Mammary epithelial cell (primary cell): ENCODE measurements at regions of chr15 and their contacts with region 1.

Region 1: DNA sequence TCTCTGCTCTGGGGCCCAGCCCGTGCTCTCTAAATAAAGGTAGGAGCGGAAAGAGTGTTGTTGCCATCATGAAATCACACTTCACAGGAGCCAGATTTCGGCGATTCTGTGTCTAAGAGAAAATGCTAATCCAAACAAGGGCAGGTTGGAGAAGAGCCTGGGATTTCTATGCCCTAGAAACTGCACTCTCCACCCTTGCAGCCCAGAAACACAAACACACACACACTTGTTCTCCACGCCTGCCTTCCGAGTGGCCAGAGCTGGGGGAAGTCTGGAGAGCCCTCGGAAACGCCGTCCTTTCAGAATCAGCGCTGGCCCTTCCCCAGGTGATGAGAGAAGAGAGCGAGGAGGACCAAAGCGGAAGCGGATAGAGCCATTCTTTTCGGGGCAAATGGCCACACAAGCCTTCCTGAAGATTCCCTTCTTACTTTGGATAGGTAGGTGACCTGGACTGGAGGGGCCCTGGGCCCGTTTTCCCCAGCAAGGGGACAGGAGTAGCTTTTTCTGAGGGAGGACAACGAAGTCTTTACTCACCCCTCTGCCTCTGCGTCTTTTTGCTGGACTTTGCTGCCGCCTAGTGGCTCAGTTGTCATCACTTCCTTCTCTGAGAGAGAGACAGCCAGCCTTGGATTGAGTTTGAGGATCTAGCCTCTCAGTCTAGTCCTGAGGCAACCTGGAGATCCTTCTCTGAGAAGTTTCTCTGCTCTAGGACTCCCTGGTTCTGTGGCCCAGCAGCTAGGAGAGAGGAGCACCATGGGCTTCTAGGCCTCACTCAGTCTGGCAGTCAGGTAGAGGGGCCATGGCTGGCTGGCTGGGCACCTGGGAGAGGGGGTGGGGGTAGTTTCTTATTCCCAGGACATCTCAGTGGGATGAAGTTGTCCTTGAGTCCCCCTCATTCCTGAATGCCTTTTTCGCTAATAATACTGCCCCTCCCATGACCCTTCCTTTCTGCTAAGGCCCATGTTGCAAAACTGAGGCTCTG is 37.7 kb downstream of the SENP8 start:
- DNase-seq: peak; percentile 74
- H3K4me3 ChIP-seq: peak overlapping the region; percentile 29 to 40 (median 39)
- H3K27ac ChIP-seq: peak overlapping the region; percentile 47
- H3K4me1 ChIP-seq: peaks cover 20% of the 10 kb centered on the region
- H3K27me3 ChIP-seq: no peaks in the 10 kb centered on the region
- CTCF ChIP-seq: peak; percentile 86 to 90

Region 2: GRCh38 chr15:70974004-70974832 is 1181.7 kb before region 1 on chr15:
- CTCF ChIA-PET with region 1: no interaction called
- dilution Hi-C with region 1: no loop called
- in situ Hi-C with region 1: no loop called
- intact Hi-C with region 1: loop called (anchors 5 kb)
- DNase-seq: peak; percentile 36
- H3K4me3 ChIP-seq: no peak overlapping the region
- H3K27ac ChIP-seq: no peak overlapping the region
- H3K4me1 ChIP-seq: no peaks in the 10 kb centered on the region
- H3K27me3 ChIP-seq: no peaks in the 10 kb centered on the region
- CTCF ChIP-seq: peak; percentile 16 to 49

Region 3: GRCh38 chr15:71532994-71533393 is 622.9 kb before region 1 on chr15:
- CTCF ChIA-PET with region 1: no interaction called
- dilution Hi-C with region 1: no loop called
- in situ Hi-C with region 1: no loop called
- intact Hi-C with region 1: loop called (anchors 10 kb)
- DNase-seq: peak; percentile 63
- H3K4me3 ChIP-seq: no peak overlapping the region
- H3K27ac ChIP-seq: no peak overlapping the region
- H3K4me1 ChIP-seq: peaks cover 8% of the 10 kb centered on the region
- H3K27me3 ChIP-seq: no peaks in the 10 kb centered on the region
- CTCF ChIP-seq: peak; percentile 74 to 81

Region 4: GRCh38 chr15:71743861-71744382 is 412.0 kb before region 1 on chr15:
- CTCF ChIA-PET with region 1: no interaction called
- dilution Hi-C with region 1: no loop called
- in situ Hi-C with region 1: no loop called
- intact Hi-C with region 1: loop called (anchors 2 kb)
- DNase-seq: peak; percentile 21
- H3K4me3 ChIP-seq: no peak overlapping the region
- H3K27ac ChIP-seq: no peak overlapping the region
- H3K4me1 ChIP-seq: peaks cover 27% of the 10 kb centered on the region
- H3K27me3 ChIP-seq: no peaks in the 10 kb centered on the region
- CTCF ChIP-seq: peak; percentile 57 to 71

Region 5: GRCh38 chr15:71800835-71801745 is 354.8 kb before region 1 on chr15:
- CTCF ChIA-PET with region 1: no interaction called
- dilution Hi-C with region 1: no loop called
- in situ Hi-C with region 1: loop called in 1 of 2 experiments (anchors 25 kb)
- intact Hi-C with region 1: loop called (anchors 1 kb)
- DNase-seq: peak; percentile 54
- H3K4me3 ChIP-seq: no peak overlapping the region
- H3K27ac ChIP-seq: no peak overlapping the region
- H3K4me1 ChIP-seq: peaks cover 7% of the 10 kb centered on the region
- H3K27me3 ChIP-seq: no peaks in the 10 kb centered on the region
- CTCF ChIP-seq: peak; percentile 84 to 86

Region 6: GRCh38 chr15:71874245-71874644 is 281.7 kb before region 1 on chr15:
- CTCF ChIA-PET with region 1: interaction called, 21 read pairs
- dilution Hi-C with region 1: no loop called
- in situ Hi-C with region 1: no loop called
- intact Hi-C with region 1: no loop called
- DNase-seq: no peak
- H3K4me3 ChIP-seq: no peak overlapping the region
- H3K27ac ChIP-seq: no peak overlapping the region
- H3K4me1 ChIP-seq: no peaks in the 10 kb centered on the region
- H3K27me3 ChIP-seq: no peaks in the 10 kb centered on the region
- CTCF ChIP-seq: no peak

Region 7: DNA sequence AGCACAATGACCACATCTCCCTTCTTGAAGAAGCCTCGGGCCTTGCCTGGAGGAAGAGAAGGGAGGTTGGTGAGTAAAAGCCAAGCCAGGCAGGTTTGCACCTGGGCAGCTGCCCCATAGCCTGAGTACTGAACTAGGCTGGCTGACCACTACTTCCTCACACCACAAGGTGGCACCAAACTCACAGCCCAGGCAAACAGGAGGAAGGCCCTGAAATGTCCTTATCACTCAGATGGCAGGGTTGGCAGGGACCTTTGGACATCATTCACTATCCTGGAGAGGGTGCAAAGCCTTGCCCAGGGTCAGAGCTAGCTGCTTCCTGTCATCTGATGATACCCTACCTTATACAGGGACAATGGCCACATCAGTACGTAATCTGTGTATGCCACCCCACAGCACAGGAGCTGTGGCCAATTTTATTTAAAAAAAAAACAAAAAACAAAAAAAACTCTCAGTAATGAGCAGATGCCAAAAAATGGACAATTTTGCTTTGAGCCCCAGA is 43.8 kb after region 1 on chr15:
- CTCF ChIA-PET with region 1: no interaction called
- dilution Hi-C with region 1: no loop called
- in situ Hi-C with region 1: no loop called
- intact Hi-C with region 1: no loop called
- DNase-seq: peak; percentile 65
- H3K4me3 ChIP-seq: no peak overlapping the region
- H3K27ac ChIP-seq: no peak overlapping the region
- H3K4me1 ChIP-seq: peaks cover 84% of the 10 kb centered on the region
- H3K27me3 ChIP-seq: no peaks in the 10 kb centered on the region
- CTCF ChIP-seq: peak; percentile 96 to 98